Naive thymus-derived CD4-positive, alpha-beta T cell (primary cell): ENCODE measurements at regions of chr7 and their contacts with region 1.

Region 1: DNA sequence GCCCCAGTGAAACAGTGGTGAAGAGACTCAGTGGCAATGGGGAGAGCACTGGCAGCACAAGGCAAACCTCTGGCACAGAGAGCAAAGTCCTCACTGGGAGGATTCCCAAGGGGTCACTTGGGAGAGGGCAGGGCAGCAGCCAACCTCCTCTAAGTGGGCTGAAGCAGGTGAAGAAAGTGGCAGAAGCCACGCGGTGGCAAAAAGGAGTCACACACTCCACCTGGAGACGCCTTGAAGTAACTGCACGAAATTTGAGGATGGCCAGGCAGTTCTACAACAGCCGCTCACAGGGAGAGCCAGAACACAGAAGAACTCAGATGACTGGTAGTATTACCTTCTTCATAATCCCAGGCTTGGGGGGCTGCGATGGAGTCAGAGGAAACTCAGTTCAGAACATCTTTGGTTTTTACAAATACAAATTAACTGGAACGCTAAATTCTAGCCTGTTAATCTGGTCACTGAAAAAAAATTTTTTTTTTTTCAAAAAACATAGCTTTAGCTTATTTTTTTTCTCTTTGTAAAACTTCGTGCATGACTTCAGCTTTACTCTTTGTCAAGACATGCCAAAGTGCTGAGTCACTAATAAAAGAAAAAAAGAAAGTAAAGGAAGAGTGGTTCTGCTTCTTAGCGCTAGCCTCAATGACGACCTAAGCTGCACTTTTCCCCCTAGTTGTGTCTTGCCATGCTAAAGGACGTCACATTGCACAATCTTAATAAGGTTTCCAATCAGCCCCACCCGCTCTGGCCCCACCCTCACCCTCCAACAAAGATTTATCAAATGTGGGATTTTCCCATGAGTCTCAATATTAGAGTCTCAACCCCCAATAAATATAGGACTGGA is 435 bp upstream of the IL6 start:
- DNase-seq: peak; percentile 19 to 67 (median 49)
- ATAC-seq: peak; percentile 84
- H3K4me3 ChIP-seq: no peak overlapping the region
- H3K4me3 Mint-ChIP-seq: peak overlapping the region; percentile 72 to 84 (median 78)
- H3K27ac ChIP-seq: no peak overlapping the region
- H3K27ac Mint-ChIP-seq: peak overlapping the region in 2 of 9 donors; percentile 15 to 41
- H3K4me1 ChIP-seq: peaks cover 0 to 5% of the 10 kb centered on the region in 2 donors
- H3K4me1 Mint-ChIP-seq: peaks cover 7 to 42% (median 21%) of the 10 kb centered on the region in 7 donors
- H3K27me3 ChIP-seq: no peaks in the 10 kb centered on the region
- H3K27me3 Mint-ChIP-seq: peaks cover 0 to 55% (median 4%) of the 10 kb centered on the region in 5 donors

Region 2: DNA sequence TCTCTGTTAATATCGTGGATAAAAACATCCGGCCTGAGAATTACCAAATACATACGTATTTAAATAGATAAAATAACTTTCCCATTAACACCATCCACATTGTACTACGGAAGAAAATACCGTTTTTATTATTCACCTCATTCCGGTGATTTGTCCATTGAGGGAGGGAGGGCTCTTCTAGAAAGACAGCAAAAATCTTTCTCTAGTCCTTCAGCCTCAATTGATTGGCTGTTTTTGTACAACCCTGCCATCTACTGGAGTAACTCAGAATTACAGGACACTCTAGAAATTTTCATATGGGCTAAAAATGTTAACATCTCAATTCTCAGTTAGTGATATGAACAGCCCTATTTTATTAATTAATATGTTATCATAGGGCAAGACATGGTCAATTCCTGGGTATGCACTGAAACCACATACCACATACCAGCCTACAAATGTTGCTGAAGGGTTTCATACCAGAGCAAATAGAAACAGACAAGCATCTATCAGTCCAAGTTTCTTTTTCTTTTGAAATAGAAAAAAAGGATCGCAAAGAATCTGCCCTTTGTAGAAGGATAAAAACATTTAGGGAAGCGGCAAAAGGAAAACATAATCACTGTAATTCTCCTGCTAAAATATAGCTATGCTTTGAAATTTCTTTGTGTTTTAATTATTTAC is 725.1 kb before region 1 on chr7:
- CTCF ChIA-PET with region 1: no interaction called
- POLR2A ChIA-PET with region 1: no interaction called
- intact Hi-C with region 1: no loop called
- DNase-seq: peak in 7 of 9 donors; percentile 14 to 69 (median 61)
- ATAC-seq: peak; percentile 81
- H3K4me3 ChIP-seq: no peak overlapping the region
- H3K4me3 Mint-ChIP-seq: peak overlapping the region in 7 of 10 donors; percentile 37 to 75 (median 61)
- H3K27ac ChIP-seq: no peak overlapping the region
- H3K27ac Mint-ChIP-seq: peak overlapping the region in 2 of 9 donors; percentile 26 to 53
- H3K4me1 ChIP-seq: no peaks in the 10 kb centered on the region
- H3K4me1 Mint-ChIP-seq: peaks cover 0 to 7% (median 2%) of the 10 kb centered on the region in 7 donors
- H3K27me3 ChIP-seq: no peaks in the 10 kb centered on the region
- H3K27me3 Mint-ChIP-seq: peaks cover 0 to 15% (median 9%) of the 10 kb centered on the region in 5 donors

Region 3: GRCh38 chr7:22660732-22661131 is 65.8 kb before region 1 on chr7:
- CTCF ChIA-PET with region 1: interaction called, 6 read pairs
- POLR2A ChIA-PET with region 1: no interaction called
- intact Hi-C with region 1: loop called (anchors 1 kb)
- DNase-seq: no peak
- ATAC-seq: no peak
- H3K4me3 ChIP-seq: no peak overlapping the region
- H3K4me3 Mint-ChIP-seq: no peak overlapping the region
- H3K27ac ChIP-seq: no peak overlapping the region
- H3K27ac Mint-ChIP-seq: no peak overlapping the region
- H3K4me1 ChIP-seq: peaks cover 0 to 4% of the 10 kb centered on the region in 2 donors
- H3K4me1 Mint-ChIP-seq: peaks cover 7 to 29% (median 16%) of the 10 kb centered on the region in 7 donors
- H3K27me3 ChIP-seq: no peaks in the 10 kb centered on the region
- H3K27me3 Mint-ChIP-seq: peaks cover 0 to 39% (median 0%) of the 10 kb centered on the region in 5 donors

Region 4: GRCh38 chr7:22672846-22673652 is 53.5 kb before region 1 on chr7:
- CTCF ChIA-PET with region 1: interaction called, 3 read pairs
- POLR2A ChIA-PET with region 1: no interaction called
- intact Hi-C with region 1: loop called (anchors 5 kb)
- DNase-seq: no peak
- ATAC-seq: no peak
- H3K4me3 ChIP-seq: no peak overlapping the region
- H3K4me3 Mint-ChIP-seq: peak overlapping the region in 7 of 10 donors; percentile 7 to 68 (median 37)
- H3K27ac ChIP-seq: no peak overlapping the region
- H3K27ac Mint-ChIP-seq: peak overlapping the region; percentile 14 to 88 (median 78)
- H3K4me1 ChIP-seq: peaks cover 18 to 54% of the 10 kb centered on the region in 2 donors
- H3K4me1 Mint-ChIP-seq: peaks cover 43 to 68% (median 65%) of the 10 kb centered on the region in 7 donors
- H3K27me3 ChIP-seq: no peaks in the 10 kb centered on the region
- H3K27me3 Mint-ChIP-seq: peaks cover 0 to 13% (median 0%) of the 10 kb centered on the region in 5 donors

Region 5: GRCh38 chr7:22697876-22698606 is 28.5 kb before region 1 on chr7:
- CTCF ChIA-PET with region 1: interaction called, 5 read pairs
- POLR2A ChIA-PET with region 1: no interaction called
- intact Hi-C with region 1: loop called in 1 of 2 experiments (anchors 2 kb)
- DNase-seq: peak in 4 of 9 donors; percentile 10 to 25 (median 16)
- ATAC-seq: peak; percentile 79
- H3K4me3 ChIP-seq: no peak overlapping the region
- H3K4me3 Mint-ChIP-seq: peak overlapping the region in 3 of 10 donors; percentile 0 to 69 (median 31)
- H3K27ac ChIP-seq: no peak overlapping the region
- H3K27ac Mint-ChIP-seq: peak overlapping the region in 2 of 9 donors; percentile 23 to 73
- H3K4me1 ChIP-seq: peaks cover 3 to 31% of the 10 kb centered on the region in 2 donors
- H3K4me1 Mint-ChIP-seq: peaks cover 32 to 77% (median 46%) of the 10 kb centered on the region in 7 donors
- H3K27me3 ChIP-seq: no peaks in the 10 kb centered on the region
- H3K27me3 Mint-ChIP-seq: peaks cover 0 to 19% (median 0%) of the 10 kb centered on the region in 5 donors

Region 6: GRCh38 chr7:22782616-22783232 is 56.2 kb after region 1 on chr7:
- CTCF ChIA-PET with region 1: no interaction called
- POLR2A ChIA-PET with region 1: no interaction called
- intact Hi-C with region 1: loop called (anchors 1 to 2 kb)
- DNase-seq: peak; percentile 39 to 73 (median 59)
- ATAC-seq: peak; percentile 90
- H3K4me3 ChIP-seq: no peak overlapping the region
- H3K4me3 Mint-ChIP-seq: no peak overlapping the region
- H3K27ac ChIP-seq: no peak overlapping the region
- H3K27ac Mint-ChIP-seq: no peak overlapping the region
- H3K4me1 ChIP-seq: no peaks in the 10 kb centered on the region
- H3K4me1 Mint-ChIP-seq: no peaks in the 10 kb centered on the region
- H3K27me3 ChIP-seq: no peaks in the 10 kb centered on the region
- H3K27me3 Mint-ChIP-seq: peaks cover 0 to 23% (median 0%) of the 10 kb centered on the region in 5 donors

Region 7: GRCh38 chr7:23696916-23697441 is 970.4 kb after region 1 on chr7:
- CTCF ChIA-PET with region 1: no interaction called
- POLR2A ChIA-PET with region 1: no interaction called
- intact Hi-C with region 1: no loop called
- DNase-seq: peak; percentile 4 to 49 (median 37)
- ATAC-seq: peak; percentile 82
- H3K4me3 ChIP-seq: no peak overlapping the region
- H3K4me3 Mint-ChIP-seq: no peak overlapping the region
- H3K27ac ChIP-seq: no peak overlapping the region
- H3K27ac Mint-ChIP-seq: no peak overlapping the region
- H3K4me1 ChIP-seq: no peaks in the 10 kb centered on the region
- H3K4me1 Mint-ChIP-seq: peaks cover 0 to 1% (median 0%) of the 10 kb centered on the region in 7 donors
- H3K27me3 ChIP-seq: no peaks in the 10 kb centered on the region
- H3K27me3 Mint-ChIP-seq: no peaks in the 10 kb centered on the region